Caco-2 (cell line): ENCODE measurements at regions of chr6 and their contacts with region 1.

Region 1: GRCh38 chr6:149082286-149082707 is 235.2 kb upstream of the TAB2 start:
- DNase-seq: peak; percentile 75 to 79
- H3K4me3 ChIP-seq: no peak overlapping the region
- H3K4me3 Mint-ChIP-seq: no peak overlapping the region
- H3K27ac Mint-ChIP-seq: no peak overlapping the region
- H3K4me1 ChIP-seq: no peaks in the 10 kb centered on the region
- H3K4me1 Mint-ChIP-seq: no peaks in the 10 kb centered on the region
- H3K27me3 ChIP-seq: no peaks in the 10 kb centered on the region
- H3K27me3 Mint-ChIP-seq: no peaks in the 10 kb centered on the region
- CTCF ChIP-seq: peak; percentile 76 to 77

Region 2: GRCh38 chr6:149028767-149029405 is 53.4 kb before region 1 on chr6:
- CTCF ChIA-PET with region 1: interaction called, 6 read pairs
- POLR2A ChIA-PET with region 1: no interaction called
- intact Hi-C with region 1: loop called (anchors 1 kb)
- DNase-seq: peak; percentile 55 to 74
- H3K4me3 ChIP-seq: no peak overlapping the region
- H3K4me3 Mint-ChIP-seq: no peak overlapping the region
- H3K27ac Mint-ChIP-seq: no peak overlapping the region
- H3K4me1 ChIP-seq: no peaks in the 10 kb centered on the region
- H3K4me1 Mint-ChIP-seq: peaks cover 6% of the 10 kb centered on the region
- H3K27me3 ChIP-seq: no peaks in the 10 kb centered on the region
- H3K27me3 Mint-ChIP-seq: no peaks in the 10 kb centered on the region
- CTCF ChIP-seq: peak; percentile 42 to 61

Region 3: GRCh38 chr6:149064001-149064659 is 18.2 kb before region 1 on chr6:
- CTCF ChIA-PET with region 1: no interaction called
- POLR2A ChIA-PET with region 1: no interaction called
- intact Hi-C with region 1: no loop called
- DNase-seq: no peak
- H3K4me3 ChIP-seq: no peak overlapping the region
- H3K4me3 Mint-ChIP-seq: no peak overlapping the region
- H3K27ac Mint-ChIP-seq: no peak overlapping the region
- H3K4me1 ChIP-seq: peaks cover 5% of the 10 kb centered on the region; the same call in 1 of the 2 replicates
- H3K4me1 Mint-ChIP-seq: no peaks in the 10 kb centered on the region
- H3K27me3 ChIP-seq: no peaks in the 10 kb centered on the region; the same call in 1 of the 2 replicates
- H3K27me3 Mint-ChIP-seq: peaks cover 7% of the 10 kb centered on the region
- CTCF ChIP-seq: no peak

Region 4: GRCh38 chr6:149316798-149317655 is 234.7 kb after region 1 on chr6:
- CTCF ChIA-PET with region 1: no interaction called
- POLR2A ChIA-PET with region 1: no interaction called
- intact Hi-C with region 1: loop called (anchors 5 kb)
- DNase-seq: peak; percentile 90 to 92
- H3K4me3 ChIP-seq: peak overlapping the region; percentile 97
- H3K4me3 Mint-ChIP-seq: peak overlapping the region; percentile 89
- H3K27ac Mint-ChIP-seq: peak overlapping the region; percentile 60
- H3K4me1 ChIP-seq: peaks cover 19% of the 10 kb centered on the region; the same call in 1 of the 2 replicates
- H3K4me1 Mint-ChIP-seq: peaks cover 8% of the 10 kb centered on the region
- H3K27me3 ChIP-seq: no peaks in the 10 kb centered on the region
- H3K27me3 Mint-ChIP-seq: no peaks in the 10 kb centered on the region
- CTCF ChIP-seq: no peak